ENCODE measurements at regions of chr2 and their contacts with region 1.

Region 1: GRCh38 chr2:157302492-157303099 is 23.0 kb downstream of the ERMN start:
- DNase-seq: peak; percentile 45 to 64 (median 58)
- H3K4me3 ChIP-seq: peak overlapping the region in 1 of 7 experiments; percentile 27
- H3K27ac ChIP-seq: no peak overlapping the region
- H3K4me1 ChIP-seq: peaks cover 0 to 9% (median 3%) of the 10 kb centered on the region in 4 experiments
- H3K27me3 ChIP-seq: peaks cover 0 to 2% (median 0%) of the 10 kb centered on the region in 5 experiments

Region 2: GRCh38 chr2:157283468-157283867 is 19.1 kb before region 1 on chr2:
- CTCF ChIA-PET with region 1: interaction called, 13 read pairs
- POLR2A ChIA-PET with region 1: no interaction called
- DNase-seq: no peak
- H3K4me3 ChIP-seq: no peak overlapping the region
- H3K27ac ChIP-seq: no peak overlapping the region
- H3K4me1 ChIP-seq: no peaks in the 10 kb centered on the region
- H3K27me3 ChIP-seq: no peaks in the 10 kb centered on the region

Region 3: GRCh38 chr2:157327621-157328500 is 25.3 kb after region 1 on chr2:
- CTCF ChIA-PET with region 1: interaction called, 91 read pairs
- POLR2A ChIA-PET with region 1: no interaction called
- DNase-seq: peak; percentile 80 to 90 (median 84)
- H3K4me3 ChIP-seq: no peak overlapping the region
- H3K27ac ChIP-seq: no peak overlapping the region
- H3K4me1 ChIP-seq: peaks cover 0 to 2% (median 0%) of the 10 kb centered on the region in 4 experiments
- H3K27me3 ChIP-seq: no peaks in the 10 kb centered on the region

Region 4: DNA sequence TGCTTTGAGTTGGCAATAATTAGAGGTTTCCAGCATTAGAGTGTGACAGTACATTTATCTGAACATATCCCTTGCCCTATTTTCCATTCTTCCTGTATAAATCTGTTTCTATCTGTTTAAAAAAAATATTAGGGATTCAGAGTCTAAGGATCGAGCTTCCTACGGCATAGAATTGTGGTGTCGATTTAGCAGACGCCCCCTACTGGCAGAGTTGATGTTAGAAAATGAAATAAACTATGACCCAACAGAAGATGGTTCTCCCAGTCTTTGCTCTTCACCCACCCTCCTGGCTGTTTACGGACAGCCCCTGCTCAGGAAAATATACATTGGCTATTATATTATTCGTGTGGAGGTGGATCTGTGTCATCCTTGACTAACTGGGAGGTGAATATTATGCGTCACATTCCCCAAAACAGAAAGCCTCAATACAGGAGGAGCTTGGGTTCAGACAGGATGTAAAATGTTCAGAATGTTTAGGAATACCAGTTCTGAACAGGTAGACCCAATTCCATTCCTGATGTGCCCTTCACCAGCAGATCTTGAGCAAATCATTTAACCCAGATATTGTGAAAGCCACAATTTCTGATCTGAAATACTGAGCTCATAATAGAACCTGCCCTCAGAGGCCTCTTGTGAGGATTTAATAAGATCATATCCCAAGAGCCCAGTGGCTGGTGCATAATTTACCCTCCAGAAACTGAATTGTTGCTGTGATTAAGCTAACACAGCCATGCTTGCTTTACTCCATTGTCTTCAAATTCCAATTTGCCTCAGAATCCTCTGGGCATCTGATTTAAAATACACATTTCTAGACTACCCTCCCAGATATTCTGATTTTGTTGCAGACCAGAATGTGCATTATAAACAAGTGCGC is 33.8 kb after region 1 on chr2:
- CTCF ChIA-PET with region 1: interaction called, 91 read pairs
- POLR2A ChIA-PET with region 1: no interaction called
- DNase-seq: peak; percentile 40 to 61 (median 54)
- H3K4me3 ChIP-seq: peak overlapping the region in 1 of 7 experiments; percentile 56
- H3K27ac ChIP-seq: no peak overlapping the region
- H3K4me1 ChIP-seq: no peaks in the 10 kb centered on the region
- H3K27me3 ChIP-seq: no peaks in the 10 kb centered on the region

Region 5: DNA sequence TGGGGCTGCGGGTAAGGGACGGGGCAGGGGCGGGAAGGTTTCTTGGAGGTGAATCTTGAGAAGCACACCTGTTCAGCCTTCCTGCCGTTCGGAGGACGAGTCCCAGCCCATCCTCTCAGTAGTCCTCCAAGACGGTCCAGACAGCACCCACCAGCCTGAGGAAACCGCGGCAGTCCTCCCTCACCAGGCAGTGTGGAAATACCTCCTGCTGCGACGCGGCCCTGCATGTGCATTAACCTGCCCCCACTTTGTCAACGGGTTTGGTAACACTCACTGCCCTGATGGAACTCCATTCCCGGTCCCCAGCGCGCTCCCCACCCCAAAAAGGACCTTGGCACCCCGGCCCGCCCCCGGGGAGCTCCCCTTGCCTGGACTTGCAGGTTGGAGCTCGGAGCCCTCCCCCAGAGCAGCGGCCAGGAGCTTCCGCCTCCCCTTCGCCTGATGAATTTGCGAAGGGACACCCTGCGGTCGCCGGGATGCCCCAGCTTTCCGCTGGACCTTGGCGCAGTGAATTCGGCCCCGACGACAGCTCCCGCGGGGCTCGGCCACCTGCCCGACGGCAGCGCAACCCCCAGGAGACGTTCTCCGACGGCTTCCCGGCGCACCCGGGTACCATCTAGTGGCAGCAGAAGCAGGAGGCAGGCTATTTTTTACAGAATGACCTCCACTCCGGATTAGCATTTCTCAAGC is 294.5 kb after region 1 on chr2:
- CTCF ChIA-PET with region 1: interaction called, 25 read pairs
- POLR2A ChIA-PET with region 1: no interaction called
- DNase-seq: peak; percentile 46 to 69 (median 65)
- H3K4me3 ChIP-seq: peak overlapping the region in 5 of 7 experiments; percentile 9 to 58 (median 34)
- H3K27ac ChIP-seq: no peak overlapping the region
- H3K4me1 ChIP-seq: peaks cover 0 to 3% (median 1%) of the 10 kb centered on the region in 4 experiments
- H3K27me3 ChIP-seq: peaks cover 0 to 2% (median 0%) of the 10 kb centered on the region in 5 experiments

Region 6: DNA sequence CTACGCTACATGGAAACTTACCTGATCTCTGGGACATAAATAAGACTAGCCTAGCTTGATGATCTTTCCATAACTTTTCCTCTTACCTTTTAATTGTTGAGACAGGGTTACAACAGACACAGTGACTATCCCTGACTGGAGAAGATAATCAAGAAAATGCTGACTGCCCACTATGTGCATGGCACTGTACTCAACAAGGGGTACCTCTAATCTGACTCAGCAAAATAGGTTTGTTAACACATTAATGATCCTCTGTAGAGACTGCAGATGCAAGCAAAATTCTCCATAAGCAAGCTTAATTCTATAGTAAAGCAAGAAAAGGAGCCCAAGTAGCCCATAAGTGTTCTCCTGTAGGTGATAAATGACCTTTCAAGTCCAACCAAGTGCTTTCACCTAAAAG is 300.6 kb after region 1 on chr2:
- CTCF ChIA-PET with region 1: interaction called, 21 read pairs
- POLR2A ChIA-PET with region 1: no interaction called
- DNase-seq: no peak
- H3K4me3 ChIP-seq: no peak overlapping the region
- H3K27ac ChIP-seq: no peak overlapping the region
- H3K4me1 ChIP-seq: no peaks in the 10 kb centered on the region
- H3K27me3 ChIP-seq: no peaks in the 10 kb centered on the region